ENCODE measurements at regions of chr7 and their contacts with region 1.

Region 1: GRCh38 chr7:76262683-76263402 is 39.6 kb upstream of the HSPB1 start:
- DNase-seq: peak in 4 of 5 donors; percentile 64 to 78 (median 72)
- H3K4me3 ChIP-seq: no peak overlapping the region
- H3K27ac ChIP-seq: no peak overlapping the region
- H3K4me1 ChIP-seq: peaks cover 0 to 3% (median 0%) of the 10 kb centered on the region in 3 donors
- H3K27me3 ChIP-seq: no peaks in the 10 kb centered on the region
- CTCF ChIP-seq: peak; percentile 40

Region 2: DNA sequence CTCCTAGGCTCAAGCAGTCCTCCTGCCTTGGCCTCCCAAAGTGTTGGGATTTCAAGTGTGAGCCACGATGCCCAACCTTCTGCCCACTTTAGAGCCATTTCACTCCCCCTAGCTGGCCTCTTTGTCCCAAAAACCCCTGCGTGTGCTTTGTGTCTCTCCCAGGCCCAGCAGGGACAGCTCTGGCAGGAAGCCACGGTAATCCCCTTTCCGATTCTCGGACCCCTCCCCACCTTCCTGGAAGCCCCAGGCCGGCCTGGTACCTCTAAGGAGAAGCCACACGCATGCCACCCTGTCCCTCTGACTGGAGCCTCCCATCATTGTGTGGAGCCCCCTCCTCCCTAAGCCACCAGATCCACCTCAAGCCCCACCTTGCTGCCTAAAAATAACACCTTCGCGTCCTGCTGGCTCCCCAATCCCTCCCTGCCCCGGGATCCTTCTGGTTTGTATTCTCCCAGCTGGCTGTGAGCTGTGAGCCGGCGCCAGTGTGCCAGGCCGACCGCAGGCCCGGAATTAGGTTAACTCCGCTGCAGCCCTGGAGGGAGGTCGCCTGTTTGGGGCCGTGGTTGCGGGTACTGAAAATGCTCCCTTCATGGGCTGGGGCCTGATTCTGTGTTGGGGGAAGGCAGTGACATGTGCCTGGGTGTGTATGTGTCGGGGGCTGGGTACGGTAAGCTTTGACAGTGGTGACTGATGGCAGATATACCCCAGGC is 77.5 kb before region 1 on chr7:
- intact Hi-C with region 1: loop called (anchors 10 kb)
- DNase-seq: no peak
- H3K4me3 ChIP-seq: no peak overlapping the region
- H3K27ac ChIP-seq: no peak overlapping the region
- H3K4me1 ChIP-seq: no peaks in the 10 kb centered on the region
- H3K27me3 ChIP-seq: no peaks in the 10 kb centered on the region
- CTCF ChIP-seq: no peak

Region 3: DNA sequence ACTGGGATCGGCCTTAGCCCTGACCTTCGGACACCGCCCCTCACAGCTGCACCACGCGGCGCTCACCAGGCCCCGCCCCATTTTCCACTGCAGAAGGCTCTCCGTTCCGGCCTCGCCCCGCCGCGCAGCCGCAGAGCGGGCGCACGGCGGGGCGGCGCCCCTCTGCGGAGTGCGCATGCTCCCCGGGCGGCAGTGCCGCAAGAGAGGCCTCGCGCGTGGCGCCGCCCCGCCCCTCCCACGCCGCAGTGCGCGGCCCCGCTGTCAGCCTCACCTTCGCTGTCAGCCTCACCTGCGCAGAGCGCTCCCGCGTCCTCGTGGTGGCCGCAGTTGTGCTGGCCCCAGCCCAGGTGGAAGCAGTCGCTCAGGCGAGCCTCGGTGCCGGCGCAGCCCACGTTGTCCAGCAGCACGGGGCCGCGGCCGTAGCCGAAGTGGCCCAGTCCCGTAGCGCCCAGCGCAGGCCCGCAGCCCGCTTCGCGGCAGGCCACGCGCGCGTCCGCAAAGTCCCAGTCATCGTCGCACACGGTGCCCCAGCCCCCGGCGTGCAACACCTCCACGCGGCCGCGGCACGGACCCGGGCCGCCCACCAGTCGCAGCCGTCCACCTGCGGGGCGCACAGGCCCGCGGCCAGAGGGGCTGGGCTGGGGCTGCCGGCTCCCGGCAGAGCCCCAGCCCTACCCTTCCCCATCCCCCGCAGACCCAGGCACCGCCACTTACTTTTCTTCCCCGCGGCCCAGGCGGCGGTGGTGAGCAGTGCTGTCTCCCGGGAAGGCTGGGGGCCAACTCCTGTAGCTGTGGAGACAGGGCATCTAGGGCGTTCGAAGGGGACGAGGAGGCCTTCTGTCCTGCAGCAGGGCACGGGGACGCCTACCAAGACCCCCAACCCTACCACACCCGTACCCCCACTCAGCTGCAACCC is 130.5 kb after region 1 on chr7:
- intact Hi-C with region 1: no loop called
- DNase-seq: peak; percentile 90 to 98 (median 96)
- H3K4me3 ChIP-seq: peak overlapping the region; percentile 78 to 82 (median 82)
- H3K27ac ChIP-seq: peak overlapping the region; percentile 83 to 89
- H3K4me1 ChIP-seq: peaks cover 0 to 18% (median 10%) of the 10 kb centered on the region in 3 donors
- H3K27me3 ChIP-seq: no peaks in the 10 kb centered on the region
- CTCF ChIP-seq: peak; percentile 1

Measured in kidney (tissue), 22 donors.